Heart right ventricle (tissue), 16 donors: ENCODE measurements at regions of chr5 and their contacts with region 1.

Region 1: DNA sequence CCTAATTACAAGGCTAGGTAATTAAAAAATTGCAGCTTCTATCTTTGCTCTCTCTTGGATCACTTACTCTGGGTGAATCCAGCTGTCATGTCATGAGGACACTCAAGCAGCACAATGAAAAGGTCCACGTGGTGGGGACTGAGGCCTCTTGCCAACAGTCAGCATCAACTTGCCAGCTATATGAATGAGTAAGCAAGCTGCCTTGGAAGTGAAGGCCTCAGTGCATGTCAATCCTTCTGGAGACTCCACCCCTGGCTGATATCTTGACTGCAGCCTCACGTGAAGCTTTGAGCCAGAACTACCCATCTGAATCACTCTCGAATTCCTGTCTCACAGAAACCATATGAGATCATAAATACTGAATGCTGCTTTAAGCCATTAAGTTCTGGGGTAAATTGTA is 140.5 kb downstream of the SNX18 start:
- DNase-seq: peak; percentile 25 to 31
- ATAC-seq: peak in 4 of 8 donors; percentile 22 to 71 (median 51)
- H3K4me3 ChIP-seq: no peak overlapping the region
- H3K27ac ChIP-seq: no peak overlapping the region
- H3K4me1 ChIP-seq: peaks cover 0 to 34% (median 12%) of the 10 kb centered on the region in 9 donors
- H3K27me3 ChIP-seq: no peaks in the 10 kb centered on the region
- CTCF ChIP-seq: no peak

Region 2: DNA sequence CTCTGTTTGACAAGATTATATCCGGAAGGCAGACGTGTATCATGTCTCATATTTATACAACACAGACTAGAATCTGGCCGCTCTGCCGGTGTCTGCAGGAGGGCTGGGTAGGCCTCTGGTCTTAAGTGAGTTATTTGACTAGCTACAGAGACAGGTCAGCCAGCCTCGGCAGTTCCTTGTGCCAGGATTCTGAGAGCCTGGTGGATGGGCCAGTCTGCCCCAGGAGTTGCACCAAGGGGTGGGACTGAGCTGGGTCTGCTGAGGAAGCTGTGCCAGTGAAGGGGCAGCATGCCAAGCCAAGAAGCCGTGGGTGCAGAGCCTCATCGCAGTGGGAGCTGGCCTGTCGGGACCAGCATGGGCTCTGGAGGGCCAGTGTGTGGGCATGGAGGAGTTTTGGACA is 133.3 kb before region 1 on chr5:
- intact Hi-C with region 1: loop called in 1 of 10 experiments (anchors 5 kb)
- DNase-seq: peak; percentile 36 to 56
- ATAC-seq: peak in 7 of 8 donors; percentile 9 to 72 (median 31)
- H3K4me3 ChIP-seq: peak overlapping the region in 3 of 10 donors; percentile 8 to 18 (median 15)
- H3K27ac ChIP-seq: peak overlapping the region in 9 of 10 donors; percentile 50 to 80 (median 71)
- H3K4me1 ChIP-seq: peaks cover 19 to 93% (median 87%) of the 10 kb centered on the region in 9 donors
- H3K27me3 ChIP-seq: no peaks in the 10 kb centered on the region
- CTCF ChIP-seq: no peak